ENCODE measurements at regions of chr6 and their contacts with region 1.

Region 1: DNA sequence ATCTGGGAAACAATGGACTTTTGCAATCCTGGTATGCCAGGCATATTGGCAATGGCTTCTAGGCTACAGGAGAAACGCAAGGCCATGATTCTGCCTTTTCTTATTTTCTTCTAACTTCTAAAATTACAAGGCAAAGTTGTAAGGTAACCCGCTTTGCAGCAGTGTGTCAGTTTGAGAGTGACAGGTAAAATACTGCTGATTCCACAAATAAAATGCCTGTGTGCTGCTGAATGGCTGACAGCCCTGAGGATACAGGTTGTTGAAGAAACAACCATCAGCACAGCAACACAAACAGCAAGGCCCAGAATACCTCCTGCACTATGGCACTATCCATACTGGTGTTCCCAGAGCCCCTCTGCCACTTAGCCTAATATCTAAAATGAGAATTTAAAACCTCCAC is 37.1 kb downstream of the SLC17A1 start:
- DNase-seq: no peak
- ATAC-seq: no peak
- H3K4me3 Mint-ChIP-seq: no peak overlapping the region
- H3K27ac Mint-ChIP-seq: no peak overlapping the region
- H3K4me1 Mint-ChIP-seq: no peaks in the 10 kb centered on the region
- H3K27me3 Mint-ChIP-seq: peaks cover 9% of the 10 kb centered on the region

Region 2: DNA sequence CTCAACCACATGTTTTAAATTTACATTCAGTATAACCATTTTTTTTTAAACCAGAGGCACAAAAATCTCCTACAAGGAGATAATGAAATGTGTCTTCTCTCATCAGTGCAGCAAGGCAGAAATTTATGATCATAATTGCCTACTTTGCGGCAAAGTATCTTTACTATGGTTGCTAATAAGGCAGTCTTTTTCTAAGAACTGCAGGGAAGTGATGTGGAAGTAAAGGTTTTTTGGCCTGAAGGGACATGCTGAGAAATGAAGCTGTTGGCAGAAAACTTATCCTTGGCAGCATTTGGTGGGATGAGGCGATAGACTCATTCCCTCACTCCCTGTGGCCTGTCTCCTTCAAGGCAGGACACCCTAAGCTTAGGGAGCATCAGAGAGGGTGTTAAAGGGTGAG is 94.0 kb before region 1 on chr6:
- CTCF ChIA-PET with region 1: no interaction called
- POLR2A ChIA-PET with region 1: interaction called, 15 read pairs
- intact Hi-C with region 1: no loop called
- DNase-seq: no peak
- ATAC-seq: no peak
- H3K4me3 Mint-ChIP-seq: no peak overlapping the region
- H3K27ac Mint-ChIP-seq: no peak overlapping the region
- H3K4me1 Mint-ChIP-seq: no peaks in the 10 kb centered on the region
- H3K27me3 Mint-ChIP-seq: peaks cover 14% of the 10 kb centered on the region

Measured in activated CD4-positive, alpha-beta T cell treated with anti-CD3 and anti-CD28 coated beads for 36 hours (primary cell).